ENCODE measurements at regions of chr3 and their contacts with region 1.

Region 1: DNA sequence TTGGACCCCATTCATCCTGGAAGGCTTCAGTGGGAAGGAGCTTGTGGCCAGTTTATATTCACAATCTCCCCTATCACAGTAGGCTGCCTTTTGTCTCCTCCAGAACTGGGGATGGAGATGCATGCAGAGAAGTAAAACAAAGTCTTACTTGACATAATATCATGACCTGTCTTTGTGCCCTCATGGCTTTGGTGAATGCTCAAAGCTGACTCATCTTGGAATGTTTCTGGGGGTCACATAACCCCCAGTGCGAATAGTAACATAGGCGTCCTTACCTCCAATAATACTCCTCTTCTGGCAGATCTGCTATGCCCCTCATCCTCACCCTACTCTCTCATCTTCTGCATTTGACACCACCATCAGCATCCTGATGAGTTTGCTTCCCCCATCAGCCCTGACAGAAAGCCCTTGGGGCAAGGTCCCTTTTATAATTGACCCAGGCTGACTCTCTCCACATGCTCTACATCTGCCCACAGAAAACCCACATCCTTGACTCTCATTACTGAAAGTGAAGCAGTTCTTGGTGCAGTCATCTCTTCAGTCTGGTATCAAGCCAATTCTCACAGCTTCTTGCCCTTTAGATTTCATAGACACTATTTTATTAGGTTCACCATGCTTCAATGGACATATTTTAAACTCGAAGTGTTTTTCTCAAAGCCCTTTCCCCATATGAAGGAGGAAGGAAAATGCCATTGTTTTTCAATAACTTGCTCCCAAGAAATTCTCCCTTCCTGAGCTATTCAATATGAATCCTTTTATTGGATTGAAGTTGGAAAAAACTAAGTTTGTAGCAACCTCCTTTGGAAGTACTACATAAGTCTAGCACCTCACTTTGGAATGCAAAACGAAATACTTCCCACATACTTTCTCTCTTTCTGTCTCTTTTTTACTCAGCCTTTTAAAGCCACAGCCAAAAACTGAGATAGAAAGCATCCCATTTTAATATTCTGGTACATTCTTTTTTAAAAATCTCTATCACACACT is 36.6 kb downstream of the OSTN start:
- DNase-seq: no peak
- ATAC-seq: no peak
- H3K4me3 ChIP-seq: no peak overlapping the region
- H3K27ac ChIP-seq: no peak overlapping the region
- H3K4me1 ChIP-seq: no peaks in the 10 kb centered on the region
- H3K27me3 ChIP-seq: no peaks in the 10 kb centered on the region

Region 2: GRCh38 chr3:191388823-191389222 is 153.2 kb after region 1 on chr3:
- intact Hi-C with region 1: loop called in 1 of 2 experiments (anchors 10 kb)
- DNase-seq: no peak
- ATAC-seq: no peak
- H3K4me3 ChIP-seq: no peak overlapping the region
- H3K27ac ChIP-seq: no peak overlapping the region
- H3K4me1 ChIP-seq: no peaks in the 10 kb centered on the region
- H3K27me3 ChIP-seq: no peaks in the 10 kb centered on the region